ENCODE measurements at regions of chr12 and their contacts with region 1.

Region 1: DNA sequence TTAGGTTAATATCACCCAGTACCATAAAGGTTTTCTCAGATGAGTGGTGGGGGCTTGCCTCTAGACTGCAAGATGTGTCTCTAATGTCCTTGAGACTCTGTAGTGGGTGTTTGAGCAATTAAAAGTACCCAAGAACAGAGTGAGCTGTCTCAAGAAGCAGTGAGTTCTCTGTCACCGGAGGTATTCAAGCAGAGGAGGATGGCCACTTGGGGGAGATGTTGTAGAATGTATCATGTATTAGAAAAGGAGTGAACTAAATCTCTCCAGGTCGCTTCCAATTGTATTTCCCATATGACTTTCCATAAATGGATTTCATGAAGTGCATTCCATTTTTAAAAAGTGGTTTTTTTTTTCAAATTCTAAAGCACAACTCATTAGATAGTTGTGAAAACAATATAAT is 35.0 kb downstream of the SLC17A8 start:
- DNase-seq: peak; percentile 65
- H3K4me3 Mint-ChIP-seq: no peak overlapping the region
- H3K27ac Mint-ChIP-seq: no peak overlapping the region
- H3K4me1 Mint-ChIP-seq: no peaks in the 10 kb centered on the region
- H3K27me3 Mint-ChIP-seq: no peaks in the 10 kb centered on the region
- CTCF ChIP-seq: peak; percentile 62

Region 2: DNA sequence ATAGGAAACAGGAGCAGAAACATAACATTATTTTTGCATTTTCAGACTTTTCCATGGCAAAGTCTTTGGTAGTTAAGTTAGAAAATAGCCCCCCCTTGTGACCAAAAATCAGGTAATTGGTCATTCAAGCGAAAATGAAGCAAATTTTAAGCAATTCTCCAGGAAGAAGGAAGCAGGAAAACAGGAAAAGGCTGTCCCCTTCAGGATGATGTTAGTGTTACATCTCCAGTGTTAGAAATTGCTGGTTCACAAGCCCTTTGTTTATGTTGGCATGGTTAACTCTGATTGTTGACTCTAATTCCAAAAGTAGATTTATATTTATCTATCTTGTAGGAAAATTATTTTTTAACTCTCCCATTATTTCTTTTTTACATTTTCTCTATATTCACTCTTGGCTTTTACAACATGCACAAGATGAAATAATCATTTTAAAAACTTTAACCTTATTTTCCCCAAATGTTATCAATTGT is 162.8 kb after region 1 on chr12:
- CTCF ChIA-PET with region 1: interaction called, 8 read pairs
- intact Hi-C with region 1: loop called (anchors 1 kb)
- DNase-seq: peak; percentile 74
- H3K4me3 Mint-ChIP-seq: no peak overlapping the region
- H3K27ac Mint-ChIP-seq: no peak overlapping the region
- H3K4me1 Mint-ChIP-seq: peaks cover 9% of the 10 kb centered on the region
- H3K27me3 Mint-ChIP-seq: no peaks in the 10 kb centered on the region
- CTCF ChIP-seq: peak; percentile 78

Region 3: DNA sequence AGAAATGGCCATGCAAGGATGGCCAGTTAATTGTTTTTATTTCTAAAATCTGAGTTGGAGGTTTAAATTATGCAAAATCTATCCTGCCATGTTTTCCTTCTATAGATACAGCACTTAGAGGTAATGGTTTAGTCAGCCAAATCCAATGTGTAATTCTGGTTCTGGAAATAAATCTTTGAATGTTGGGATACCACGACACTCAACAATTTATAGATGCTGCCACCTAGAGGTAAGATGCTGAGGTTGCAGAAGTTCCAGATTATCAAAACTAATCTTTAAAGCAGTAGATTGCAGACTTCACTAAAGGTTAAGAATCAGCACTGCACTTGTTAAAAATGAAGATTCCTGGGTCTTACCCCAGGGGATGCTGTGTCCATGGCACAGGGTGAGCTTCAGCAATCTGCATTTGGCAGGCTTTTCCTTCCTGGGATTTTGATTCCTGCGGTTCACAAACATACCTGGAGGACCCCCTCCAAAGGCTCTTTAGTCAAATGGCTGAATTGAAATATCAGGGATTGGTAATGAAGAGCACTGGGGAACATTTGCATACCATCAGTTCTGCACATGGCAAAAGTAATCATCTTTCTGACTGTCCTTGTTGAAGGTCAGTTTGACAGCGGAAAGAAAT is 349.3 kb after region 1 on chr12:
- CTCF ChIA-PET with region 1: no interaction called
- intact Hi-C with region 1: loop called (anchors 1 kb)
- DNase-seq: peak; percentile 27
- H3K4me3 Mint-ChIP-seq: no peak overlapping the region
- H3K27ac Mint-ChIP-seq: no peak overlapping the region
- H3K4me1 Mint-ChIP-seq: no peaks in the 10 kb centered on the region
- H3K27me3 Mint-ChIP-seq: no peaks in the 10 kb centered on the region
- CTCF ChIP-seq: peak; percentile 35

Measured in Calu3 (cell line).